ENCODE measurements at regions of chr7 and their contacts with region 1.

Region 1: GRCh38 chr7:130961128-130961601 is 227.2 kb upstream of the KLF14 start:
- DNase-seq: peak; percentile 85
- H3K4me3 Mint-ChIP-seq: peak overlapping the region; percentile 95
- H3K27ac Mint-ChIP-seq: peak overlapping the region; percentile 98
- H3K4me1 Mint-ChIP-seq: peaks cover 34% of the 10 kb centered on the region
- H3K27me3 Mint-ChIP-seq: no peaks in the 10 kb centered on the region

Region 2: GRCh38 chr7:130943336-130943901 is 17.7 kb before region 1 on chr7:
- intact Hi-C with region 1: loop called (anchors 1 kb)
- DNase-seq: no peak
- H3K4me3 Mint-ChIP-seq: peak overlapping the region; percentile 68
- H3K27ac Mint-ChIP-seq: peak overlapping the region; percentile 70
- H3K4me1 Mint-ChIP-seq: peaks cover 85% of the 10 kb centered on the region
- H3K27me3 Mint-ChIP-seq: no peaks in the 10 kb centered on the region

Region 3: GRCh38 chr7:131249003-131249402 is 287.8 kb after region 1 on chr7:
- intact Hi-C with region 1: no loop called
- DNase-seq: no peak
- H3K4me3 Mint-ChIP-seq: no peak overlapping the region
- H3K27ac Mint-ChIP-seq: no peak overlapping the region
- H3K4me1 Mint-ChIP-seq: peaks cover 4% of the 10 kb centered on the region
- H3K27me3 Mint-ChIP-seq: peaks cover 10% of the 10 kb centered on the region